ENCODE measurements at regions of chr6 and their contacts with region 1.

Region 1: GRCh38 chr6:41040101-41040939 is 1.3 kb upstream of the UNC5CL start:
- DNase-seq: peak; percentile 30 to 43 (median 32)
- ATAC-seq: no peak; the same call in 2 of the 3 replicates
- H3K4me3 ChIP-seq: no peak overlapping the region
- H3K27ac ChIP-seq: no peak overlapping the region
- H3K4me1 ChIP-seq: peaks cover 0 to 9% of the 10 kb centered on the region in 2 experiments; a peak in 3 of 5 replicates
- H3K27me3 ChIP-seq: peaks cover 0 to 8% of the 10 kb centered on the region in 2 experiments; a peak in 1 of 5 replicates
- CTCF ChIP-seq: no peak
- EP300 ChIP-seq: no peak
- POLR2A ChIP-seq: no peak
- RAD21 ChIP-seq: no peak

Region 2: DNA sequence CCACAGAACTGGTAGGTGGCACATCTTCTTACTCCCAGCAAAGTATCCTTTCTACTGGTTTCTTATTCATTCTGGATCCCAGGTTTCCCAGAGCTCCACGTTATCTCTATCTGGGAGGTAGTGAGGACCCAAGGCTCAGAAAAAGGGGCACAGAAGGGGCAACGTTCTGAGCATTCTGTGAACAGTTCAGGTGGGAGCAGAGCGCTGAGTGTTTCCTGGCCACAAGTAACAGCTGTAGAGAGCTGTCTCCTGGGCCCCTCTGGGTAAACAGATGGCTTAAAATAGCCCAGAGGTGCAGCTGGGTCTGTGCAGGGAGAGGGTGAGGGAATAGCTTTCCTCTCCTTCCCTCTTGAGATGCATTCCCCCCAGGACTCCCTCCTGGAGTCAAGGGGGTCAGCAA is 14.8 kb after region 1 on chr6:
- CTCF ChIA-PET with region 1: no interaction called
- POLR2A ChIA-PET with region 1: interaction called, 11 read pairs
- in situ Hi-C with region 1: no loop called
- intact Hi-C with region 1: no loop called
- DNase-seq: no peak
- ATAC-seq: no peak
- H3K4me3 ChIP-seq: no peak overlapping the region
- H3K27ac ChIP-seq: no peak overlapping the region
- H3K4me1 ChIP-seq: peaks cover 9 to 37% of the 10 kb centered on the region in 2 experiments
- H3K27me3 ChIP-seq: no peaks in the 10 kb centered on the region
- CTCF ChIP-seq: no peak
- EP300 ChIP-seq: no peak
- POLR2A ChIP-seq: no peak
- RAD21 ChIP-seq: no peak

Measured in K562 (cell line).